ENCODE measurements at regions of chr20 and their contacts with region 1.

Region 1: GRCh38 chr20:48620519-48621254 is 207.1 kb downstream of the PREX1 start:
- DNase-seq: peak; percentile 68 to 81
- ATAC-seq: peak; percentile 80 to 90 (median 85)
- H3K4me3 ChIP-seq: no peak overlapping the region
- H3K4me3 Mint-ChIP-seq: peak overlapping the region; percentile 71
- H3K27ac ChIP-seq: peak overlapping the region; percentile 24
- H3K27ac Mint-ChIP-seq: peak overlapping the region; percentile 71 to 79
- H3K4me1 ChIP-seq: peaks cover 24% of the 10 kb centered on the region
- H3K4me1 Mint-ChIP-seq: peaks cover 28 to 34% of the 10 kb centered on the region in 2 donors
- H3K27me3 ChIP-seq: no peaks in the 10 kb centered on the region
- H3K27me3 Mint-ChIP-seq: no peaks in the 10 kb centered on the region
- CTCF ChIP-seq: peak; percentile 98

Region 2: DNA sequence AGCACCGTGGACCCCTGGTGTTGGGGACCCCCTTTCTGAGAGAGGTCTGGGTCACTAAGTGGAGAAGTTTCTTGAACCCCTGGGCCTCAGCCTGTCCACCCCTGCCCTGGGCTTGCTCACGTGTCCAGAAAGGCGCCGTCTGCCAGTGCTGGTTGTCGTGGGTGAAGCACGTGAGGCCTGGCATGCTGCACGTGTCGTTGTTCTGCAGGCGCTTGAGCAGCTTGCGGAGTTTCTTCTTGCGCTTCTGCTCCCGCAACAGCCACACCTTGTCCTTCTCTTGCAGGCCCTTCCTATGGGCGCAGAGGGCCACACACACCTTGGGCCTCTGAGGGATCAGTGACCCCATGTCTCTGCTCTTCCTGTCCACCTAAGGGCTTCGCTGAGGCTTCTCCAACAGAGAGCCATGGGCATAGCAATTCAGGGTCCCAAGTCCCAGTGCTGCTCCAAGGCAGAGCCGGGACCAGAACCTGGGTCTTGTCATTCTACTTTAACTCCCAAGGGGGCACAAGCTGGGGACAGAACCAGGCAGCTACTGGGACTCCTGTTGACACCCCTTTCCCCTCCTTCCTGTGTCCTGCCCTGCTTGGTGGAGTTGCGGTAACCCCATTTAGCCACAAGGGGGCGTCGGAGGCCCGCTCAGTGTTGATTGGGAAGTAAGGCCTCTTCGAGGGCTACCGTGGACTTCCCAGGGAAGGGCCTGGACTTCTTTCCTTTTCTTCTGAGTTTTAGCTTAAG is 957.2 kb before region 1 on chr20:
- intact Hi-C with region 1: loop called (anchors 1 kb)
- DNase-seq: peak; percentile 67 to 81
- ATAC-seq: peak; percentile 83 to 91 (median 87)
- H3K4me3 ChIP-seq: no peak overlapping the region
- H3K4me3 Mint-ChIP-seq: no peak overlapping the region
- H3K27ac ChIP-seq: no peak overlapping the region
- H3K27ac Mint-ChIP-seq: peak overlapping the region in 1 of 2 donors; percentile 60
- H3K4me1 ChIP-seq: peaks cover 7% of the 10 kb centered on the region
- H3K4me1 Mint-ChIP-seq: peaks cover 7 to 8% of the 10 kb centered on the region in 2 donors
- H3K27me3 ChIP-seq: no peaks in the 10 kb centered on the region
- H3K27me3 Mint-ChIP-seq: no peaks in the 10 kb centered on the region
- CTCF ChIP-seq: peak; percentile 95

Region 3: DNA sequence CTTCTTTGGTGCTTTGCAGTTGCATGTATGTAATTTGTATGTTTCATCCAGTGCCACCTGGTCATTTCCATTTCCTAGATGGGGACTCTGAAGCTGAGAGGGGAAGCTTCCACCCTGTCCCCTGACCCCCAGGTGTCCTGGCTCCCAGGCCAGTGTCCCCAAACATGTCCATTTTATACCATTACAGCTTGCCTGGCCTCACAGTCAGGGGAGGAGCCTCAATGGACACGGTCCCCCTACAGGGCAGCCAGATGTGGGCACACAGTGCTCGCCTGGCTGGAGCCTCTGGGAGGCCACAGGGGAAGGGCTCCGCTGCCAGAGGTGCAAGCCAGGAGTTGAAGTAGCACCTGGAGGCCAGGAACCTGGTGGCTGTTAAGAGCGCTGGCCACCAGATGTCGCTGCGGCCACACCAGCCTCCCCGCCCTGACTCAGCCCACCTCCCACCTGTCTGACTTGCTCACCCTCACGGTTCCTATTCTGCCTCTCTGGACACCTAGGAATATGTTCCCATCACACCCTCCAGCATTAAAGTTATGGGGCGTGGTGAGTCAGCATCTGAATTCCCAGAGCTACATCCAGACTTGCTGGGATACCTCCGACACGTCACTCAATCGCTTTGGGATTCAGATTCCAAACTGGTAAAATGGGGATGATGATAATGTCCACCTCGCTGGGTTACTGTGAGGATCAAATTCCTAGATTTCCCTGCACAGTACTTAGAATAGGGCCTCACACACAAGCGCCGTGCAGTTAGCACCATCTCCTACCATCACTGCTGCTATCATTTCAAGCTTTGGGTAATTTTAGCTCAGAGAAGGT is 942.8 kb before region 1 on chr20:
- intact Hi-C with region 1: loop called (anchors 5 kb)
- DNase-seq: peak in 1 of 2 donors; percentile 73
- ATAC-seq: peak; percentile 42 to 74 (median 54)
- H3K4me3 ChIP-seq: no peak overlapping the region
- H3K4me3 Mint-ChIP-seq: no peak overlapping the region
- H3K27ac ChIP-seq: no peak overlapping the region
- H3K27ac Mint-ChIP-seq: no peak overlapping the region
- H3K4me1 ChIP-seq: no peaks in the 10 kb centered on the region
- H3K4me1 Mint-ChIP-seq: peaks cover 6 to 7% of the 10 kb centered on the region in 2 donors
- H3K27me3 ChIP-seq: no peaks in the 10 kb centered on the region
- H3K27me3 Mint-ChIP-seq: peaks cover 0 to 2% of the 10 kb centered on the region in 2 donors
- CTCF ChIP-seq: peak; percentile 62

Region 4: GRCh38 chr20:47725248-47725973 is 895.3 kb before region 1 on chr20:
- intact Hi-C with region 1: loop called (anchors 2 kb)
- DNase-seq: peak; percentile 61 to 93
- ATAC-seq: peak; percentile 69 to 76 (median 74)
- H3K4me3 ChIP-seq: no peak overlapping the region
- H3K4me3 Mint-ChIP-seq: no peak overlapping the region
- H3K27ac ChIP-seq: no peak overlapping the region
- H3K27ac Mint-ChIP-seq: no peak overlapping the region
- H3K4me1 ChIP-seq: peaks cover 30% of the 10 kb centered on the region
- H3K4me1 Mint-ChIP-seq: peaks cover 25 to 32% of the 10 kb centered on the region in 2 donors
- H3K27me3 ChIP-seq: no peaks in the 10 kb centered on the region
- H3K27me3 Mint-ChIP-seq: no peaks in the 10 kb centered on the region
- CTCF ChIP-seq: peak; percentile 85

Region 5: DNA sequence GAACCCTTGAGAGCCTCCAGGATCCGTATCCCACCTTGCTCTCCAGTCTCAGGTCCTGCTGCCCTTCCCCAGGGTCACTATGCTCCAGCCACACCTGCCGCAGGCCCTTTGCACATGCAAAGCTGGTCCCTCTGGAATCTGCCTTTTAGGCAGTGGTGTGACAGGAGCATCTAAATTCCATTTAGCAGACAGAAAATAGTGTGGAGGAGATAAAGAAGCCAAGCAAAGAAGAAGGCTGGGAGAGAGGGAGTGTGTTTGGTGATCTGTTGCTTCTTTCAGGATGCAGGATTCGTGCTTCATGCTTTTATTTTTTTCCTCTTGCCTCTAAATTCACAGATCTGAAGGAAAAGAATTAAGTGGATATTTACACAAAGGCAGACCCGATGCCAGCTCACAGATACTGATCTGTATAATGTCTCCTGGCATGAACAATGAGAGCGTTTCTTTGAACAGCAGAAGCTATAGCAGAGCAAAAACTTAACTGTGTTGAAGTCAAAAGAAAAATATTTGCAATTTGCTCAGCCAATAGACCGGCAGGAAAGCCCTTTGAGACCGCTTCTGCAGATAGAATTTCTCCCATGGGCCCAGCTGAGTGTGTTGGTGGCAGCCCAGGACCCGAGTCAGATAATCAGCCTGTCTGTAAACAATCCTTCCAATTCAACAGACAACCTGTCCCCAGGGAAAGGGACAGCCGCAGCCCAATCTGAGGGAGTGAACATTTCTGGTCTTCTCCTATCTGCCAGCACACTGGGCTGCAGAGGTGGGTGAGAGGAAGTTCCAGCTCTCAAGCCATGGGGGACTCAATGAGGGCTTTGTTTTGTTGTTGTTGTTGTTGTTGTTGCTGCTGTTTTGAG is 374.0 kb before region 1 on chr20:
- intact Hi-C with region 1: no loop called
- DNase-seq: no peak
- ATAC-seq: no peak
- H3K4me3 ChIP-seq: no peak overlapping the region
- H3K4me3 Mint-ChIP-seq: no peak overlapping the region
- H3K27ac ChIP-seq: no peak overlapping the region
- H3K27ac Mint-ChIP-seq: no peak overlapping the region
- H3K4me1 ChIP-seq: no peaks in the 10 kb centered on the region
- H3K4me1 Mint-ChIP-seq: peaks cover 9 to 10% of the 10 kb centered on the region in 2 donors
- H3K27me3 ChIP-seq: no peaks in the 10 kb centered on the region
- H3K27me3 Mint-ChIP-seq: peaks cover 18 to 29% of the 10 kb centered on the region in 2 donors
- CTCF ChIP-seq: no peak

Region 6: GRCh38 chr20:48635433-48636310 is 15.0 kb after region 1 on chr20:
- intact Hi-C with region 1: no loop called
- DNase-seq: peak; percentile 68 to 71
- ATAC-seq: peak; percentile 57 to 70 (median 67)
- H3K4me3 ChIP-seq: no peak overlapping the region
- H3K4me3 Mint-ChIP-seq: no peak overlapping the region
- H3K27ac ChIP-seq: no peak overlapping the region
- H3K27ac Mint-ChIP-seq: peak overlapping the region; percentile 82 to 83
- H3K4me1 ChIP-seq: peaks cover 20% of the 10 kb centered on the region
- H3K4me1 Mint-ChIP-seq: peaks cover 35 to 53% of the 10 kb centered on the region in 2 donors
- H3K27me3 ChIP-seq: no peaks in the 10 kb centered on the region
- H3K27me3 Mint-ChIP-seq: no peaks in the 10 kb centered on the region
- CTCF ChIP-seq: peak; percentile 88